CD4-positive, alpha-beta memory T cell (primary cell): ENCODE measurements at regions of chr17 and their contacts with region 1.

Region 1: DNA sequence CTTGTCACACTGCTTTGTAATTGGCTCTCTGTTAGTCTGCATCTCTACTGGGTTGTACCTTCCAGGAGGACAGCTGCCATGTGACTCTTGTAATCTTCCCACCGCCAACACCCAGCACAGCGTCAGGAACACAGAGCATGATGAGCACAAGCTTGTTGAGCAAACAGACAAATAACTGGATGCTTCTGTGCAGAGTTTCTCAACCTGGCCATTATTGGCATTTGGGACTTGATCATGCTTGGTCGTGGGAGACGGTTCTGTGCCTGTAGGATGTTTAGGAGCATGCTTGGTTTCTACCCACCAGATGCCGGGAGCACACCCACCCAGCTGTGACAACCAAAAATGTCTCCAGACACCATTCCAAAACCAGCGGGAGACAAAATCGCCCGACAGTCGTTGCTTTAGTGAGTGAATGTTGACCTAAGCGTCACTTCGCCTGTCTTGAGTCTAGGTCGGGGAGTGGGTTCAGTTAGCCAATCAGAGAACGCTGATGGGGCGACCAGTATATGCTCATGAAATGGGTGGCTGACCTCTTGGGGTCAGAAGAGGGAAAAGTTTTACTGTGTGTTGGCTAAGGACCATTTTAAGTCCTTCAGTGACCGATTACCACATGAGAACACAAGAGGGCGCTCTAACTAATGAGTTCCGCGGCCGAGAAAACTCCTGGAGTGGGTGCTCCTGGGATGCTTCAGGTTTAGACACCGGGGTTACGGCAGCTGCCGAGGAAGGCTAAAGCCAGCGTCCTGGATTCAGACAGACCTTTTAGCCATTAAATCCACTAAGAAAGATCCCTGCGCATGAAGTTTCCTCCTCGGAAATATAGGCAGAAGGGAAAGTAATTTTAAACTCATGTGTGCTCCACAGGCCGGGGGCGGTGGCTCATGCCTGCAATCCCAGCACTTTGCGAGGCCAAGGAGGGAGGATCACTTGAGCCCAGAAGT is 57.8 kb upstream of the TEX2 start:
- DNase-seq: peak; percentile 49 to 65 (median 60)
- H3K4me3 ChIP-seq: no peak overlapping the region
- H3K4me3 Mint-ChIP-seq: peak overlapping the region in 6 of 8 donors; percentile 49 to 86 (median 68)
- H3K27ac ChIP-seq: no peak overlapping the region
- H3K27ac Mint-ChIP-seq: peak overlapping the region in 1 of 7 donors; percentile 25
- H3K4me1 ChIP-seq: peaks cover 4% of the 10 kb centered on the region
- H3K4me1 Mint-ChIP-seq: peaks cover 0 to 5% (median under 1%) of the 10 kb centered on the region in 4 donors
- H3K27me3 ChIP-seq: no peaks in the 10 kb centered on the region
- H3K27me3 Mint-ChIP-seq: peaks cover 2 to 16% of the 10 kb centered on the region in 2 donors

Region 2: GRCh38 chr17:64174686-64175456 is 146.0 kb before region 1 on chr17:
- CTCF ChIA-PET with region 1: no interaction called
- POLR2A ChIA-PET with region 1: no interaction called
- intact Hi-C with region 1: no loop called
- DNase-seq: no peak
- H3K4me3 ChIP-seq: no peak overlapping the region
- H3K4me3 Mint-ChIP-seq: no peak overlapping the region
- H3K27ac ChIP-seq: no peak overlapping the region
- H3K27ac Mint-ChIP-seq: no peak overlapping the region
- H3K4me1 ChIP-seq: no peaks in the 10 kb centered on the region
- H3K4me1 Mint-ChIP-seq: no peaks in the 10 kb centered on the region
- H3K27me3 ChIP-seq: no peaks in the 10 kb centered on the region
- H3K27me3 Mint-ChIP-seq: no peaks in the 10 kb centered on the region

Region 3: GRCh38 chr17:64291254-64291851 is 29.5 kb before region 1 on chr17:
- CTCF ChIA-PET with region 1: no interaction called
- POLR2A ChIA-PET with region 1: no interaction called
- intact Hi-C with region 1: no loop called
- DNase-seq: no peak
- H3K4me3 ChIP-seq: no peak overlapping the region
- H3K4me3 Mint-ChIP-seq: no peak overlapping the region
- H3K27ac ChIP-seq: no peak overlapping the region
- H3K27ac Mint-ChIP-seq: no peak overlapping the region
- H3K4me1 ChIP-seq: no peaks in the 10 kb centered on the region
- H3K4me1 Mint-ChIP-seq: no peaks in the 10 kb centered on the region
- H3K27me3 ChIP-seq: no peaks in the 10 kb centered on the region
- H3K27me3 Mint-ChIP-seq: no peaks in the 10 kb centered on the region

Region 4: GRCh38 chr17:64306850-64307463 is 13.9 kb before region 1 on chr17:
- CTCF ChIA-PET with region 1: interaction called, 22 read pairs
- POLR2A ChIA-PET with region 1: no interaction called
- intact Hi-C with region 1: no loop called
- DNase-seq: peak; percentile 54 to 61 (median 61)
- H3K4me3 ChIP-seq: no peak overlapping the region
- H3K4me3 Mint-ChIP-seq: no peak overlapping the region
- H3K27ac ChIP-seq: no peak overlapping the region
- H3K27ac Mint-ChIP-seq: no peak overlapping the region
- H3K4me1 ChIP-seq: no peaks in the 10 kb centered on the region
- H3K4me1 Mint-ChIP-seq: peaks cover 0 to 1% (median 0%) of the 10 kb centered on the region in 4 donors
- H3K27me3 ChIP-seq: no peaks in the 10 kb centered on the region
- H3K27me3 Mint-ChIP-seq: peaks cover 3% of the 10 kb centered on the region in 2 donors

Region 5: GRCh38 chr17:64343853-64344637 is 23.2 kb after region 1 on chr17:
- CTCF ChIA-PET with region 1: interaction called, 14 read pairs
- POLR2A ChIA-PET with region 1: interaction called, 3 read pairs
- intact Hi-C with region 1: loop called (anchors 1 kb)
- DNase-seq: peak; percentile 17 to 66 (median 21)
- H3K4me3 ChIP-seq: no peak overlapping the region
- H3K4me3 Mint-ChIP-seq: peak overlapping the region in 3 of 8 donors; percentile 15 to 55 (median 33)
- H3K27ac ChIP-seq: no peak overlapping the region
- H3K27ac Mint-ChIP-seq: peak overlapping the region; percentile 35 to 69 (median 64)
- H3K4me1 ChIP-seq: peaks cover 39% of the 10 kb centered on the region
- H3K4me1 Mint-ChIP-seq: peaks cover 15 to 32% (median 24%) of the 10 kb centered on the region in 4 donors
- H3K27me3 ChIP-seq: no peaks in the 10 kb centered on the region
- H3K27me3 Mint-ChIP-seq: no peaks in the 10 kb centered on the region

Region 6: GRCh38 chr17:64373722-64374121 is 52.8 kb after region 1 on chr17:
- CTCF ChIA-PET with region 1: no interaction called
- POLR2A ChIA-PET with region 1: no interaction called
- intact Hi-C with region 1: no loop called
- DNase-seq: no peak
- H3K4me3 ChIP-seq: no peak overlapping the region
- H3K4me3 Mint-ChIP-seq: no peak overlapping the region
- H3K27ac ChIP-seq: no peak overlapping the region
- H3K27ac Mint-ChIP-seq: no peak overlapping the region
- H3K4me1 ChIP-seq: no peaks in the 10 kb centered on the region
- H3K4me1 Mint-ChIP-seq: peaks cover 0 to 4% (median 0%) of the 10 kb centered on the region in 4 donors
- H3K27me3 ChIP-seq: no peaks in the 10 kb centered on the region
- H3K27me3 Mint-ChIP-seq: peaks cover 0 to 2% of the 10 kb centered on the region in 2 donors

Region 7: GRCh38 chr17:64411999-64412771 is 91.3 kb after region 1 on chr17:
- CTCF ChIA-PET with region 1: interaction called, 257 read pairs
- POLR2A ChIA-PET with region 1: no interaction called
- intact Hi-C with region 1: no loop called
- DNase-seq: no peak
- H3K4me3 ChIP-seq: no peak overlapping the region
- H3K4me3 Mint-ChIP-seq: no peak overlapping the region
- H3K27ac ChIP-seq: no peak overlapping the region
- H3K27ac Mint-ChIP-seq: peak overlapping the region in 3 of 7 donors; percentile 59 to 77 (median 66)
- H3K4me1 ChIP-seq: no peaks in the 10 kb centered on the region
- H3K4me1 Mint-ChIP-seq: peaks cover 0 to 4% (median 0%) of the 10 kb centered on the region in 4 donors
- H3K27me3 ChIP-seq: no peaks in the 10 kb centered on the region
- H3K27me3 Mint-ChIP-seq: no peaks in the 10 kb centered on the region

Region 8: GRCh38 chr17:64491034-64491859 is 170.4 kb after region 1 on chr17:
- CTCF ChIA-PET with region 1: interaction called, 20 read pairs
- POLR2A ChIA-PET with region 1: no interaction called
- intact Hi-C with region 1: no loop called
- DNase-seq: peak; percentile 40 to 58 (median 49)
- H3K4me3 ChIP-seq: no peak overlapping the region
- H3K4me3 Mint-ChIP-seq: no peak overlapping the region
- H3K27ac ChIP-seq: no peak overlapping the region
- H3K27ac Mint-ChIP-seq: peak overlapping the region in 3 of 7 donors; percentile 12 to 57 (median 18)
- H3K4me1 ChIP-seq: peaks cover 35% of the 10 kb centered on the region
- H3K4me1 Mint-ChIP-seq: peaks cover 21 to 42% (median 23%) of the 10 kb centered on the region in 4 donors
- H3K27me3 ChIP-seq: no peaks in the 10 kb centered on the region
- H3K27me3 Mint-ChIP-seq: no peaks in the 10 kb centered on the region

Region 9: GRCh38 chr17:64572638-64573154 is 251.8 kb after region 1 on chr17:
- CTCF ChIA-PET with region 1: no interaction called
- POLR2A ChIA-PET with region 1: no interaction called
- intact Hi-C with region 1: no loop called
- DNase-seq: peak in 3 of 5 donors; percentile 12 to 22 (median 15)
- H3K4me3 ChIP-seq: no peak overlapping the region
- H3K4me3 Mint-ChIP-seq: no peak overlapping the region
- H3K27ac ChIP-seq: no peak overlapping the region
- H3K27ac Mint-ChIP-seq: peak overlapping the region in 6 of 7 donors; percentile 20 to 81 (median 64)
- H3K4me1 ChIP-seq: peaks cover 6% of the 10 kb centered on the region
- H3K4me1 Mint-ChIP-seq: peaks cover 7 to 16% (median 10%) of the 10 kb centered on the region in 4 donors
- H3K27me3 ChIP-seq: no peaks in the 10 kb centered on the region
- H3K27me3 Mint-ChIP-seq: no peaks in the 10 kb centered on the region

Region 10: GRCh38 chr17:64648234-64648633 is 327.4 kb after region 1 on chr17:
- CTCF ChIA-PET with region 1: no interaction called
- POLR2A ChIA-PET with region 1: no interaction called
- intact Hi-C with region 1: loop called (anchors 5 kb)
- DNase-seq: no peak
- H3K4me3 ChIP-seq: no peak overlapping the region
- H3K4me3 Mint-ChIP-seq: no peak overlapping the region
- H3K27ac ChIP-seq: no peak overlapping the region
- H3K27ac Mint-ChIP-seq: peak overlapping the region in 1 of 7 donors; percentile 77
- H3K4me1 ChIP-seq: peaks cover 12% of the 10 kb centered on the region
- H3K4me1 Mint-ChIP-seq: peaks cover 12 to 38% (median 27%) of the 10 kb centered on the region in 4 donors
- H3K27me3 ChIP-seq: no peaks in the 10 kb centered on the region
- H3K27me3 Mint-ChIP-seq: no peaks in the 10 kb centered on the region